ENCODE measurements at regions of chr11 and their contacts with region 1.

Region 1: GRCh38 chr11:76642341-76642740 is 28.2 kb downstream of the LRRC32 start:
- DNase-seq: peak; percentile 50

Region 2: DNA sequence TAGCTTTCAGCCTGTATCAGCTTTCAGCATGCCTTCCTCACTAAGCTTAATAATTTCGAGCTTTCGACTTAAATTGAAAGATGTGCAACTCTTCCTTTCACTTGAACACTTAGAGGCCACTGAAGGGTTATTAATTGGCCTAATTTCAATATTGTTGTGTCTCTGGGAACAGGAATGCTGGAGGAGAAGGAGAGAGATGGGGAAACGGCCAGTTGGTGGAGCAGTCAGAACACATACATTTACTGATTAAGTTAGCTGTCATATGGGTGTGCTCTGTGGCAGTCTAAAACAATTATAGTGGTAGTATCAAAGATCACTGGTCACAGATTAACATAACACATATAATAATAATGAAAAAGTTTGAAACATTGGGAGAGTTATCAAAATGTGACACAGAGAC is 78.0 kb before region 1 on chr11:
- intact Hi-C with region 1: loop called in 1 of 2 experiments (anchors 2 kb)
- DNase-seq: no peak

Region 3: DNA sequence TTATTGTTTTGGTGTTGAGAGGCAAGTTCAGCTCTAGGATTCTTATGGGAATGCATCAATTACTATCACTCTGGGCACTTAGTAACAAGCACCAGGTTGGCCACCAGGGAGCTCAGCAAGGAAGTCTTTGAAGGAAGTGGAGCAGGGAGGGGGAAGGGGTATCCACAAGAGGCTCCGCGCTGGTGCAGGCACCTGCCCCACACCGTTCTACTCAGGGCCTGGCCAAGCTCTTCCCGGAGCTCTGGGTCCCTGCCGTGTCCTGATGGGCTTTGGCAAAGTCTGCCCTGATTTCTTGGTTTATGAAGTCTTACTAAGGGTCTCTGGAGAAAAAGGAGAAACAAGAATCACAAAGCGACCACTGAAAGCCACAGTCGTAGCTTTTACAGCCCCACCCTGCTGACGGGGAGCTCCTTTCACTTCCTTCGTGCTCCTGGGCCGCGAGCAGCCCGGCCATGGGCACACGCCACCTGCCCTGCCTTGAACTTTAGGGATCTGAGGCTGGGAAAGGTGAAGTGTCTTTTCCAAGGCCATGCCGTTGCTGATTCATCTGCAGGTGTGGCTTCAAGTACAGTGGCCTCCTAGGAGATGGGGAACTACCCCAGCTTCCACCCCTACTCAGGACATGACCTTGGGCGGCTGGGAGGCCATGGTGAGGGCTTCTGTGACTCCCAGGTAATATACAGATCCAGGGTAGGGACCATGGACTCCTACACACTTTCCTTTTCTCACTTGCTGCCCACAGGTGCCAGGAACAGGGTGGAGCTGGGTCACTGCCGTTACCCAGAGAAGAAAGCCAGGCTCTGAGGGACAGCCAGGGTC is 44.1 kb after region 1 on chr11:
- intact Hi-C with region 1: no loop called
- DNase-seq: no peak

Region 4: GRCh38 chr11:76756341-76756741 is 114.0 kb after region 1 on chr11:
- intact Hi-C with region 1: no loop called
- DNase-seq: no peak

Measured in posterior vena cava (tissue), 2 donors.